Aorta (tissue), 5 donors: ENCODE measurements at regions of chr9 and their contacts with region 1.

Region 1: GRCh38 chr9:96498796-96499195 is 48.8 kb downstream of the HABP4 start:
- DNase-seq: no peak
- ATAC-seq: no peak
- H3K4me3 ChIP-seq: no peak overlapping the region
- H3K27ac ChIP-seq: no peak overlapping the region
- H3K4me1 ChIP-seq: no peaks in the 10 kb centered on the region
- H3K27me3 ChIP-seq: no peaks in the 10 kb centered on the region

Region 2: DNA sequence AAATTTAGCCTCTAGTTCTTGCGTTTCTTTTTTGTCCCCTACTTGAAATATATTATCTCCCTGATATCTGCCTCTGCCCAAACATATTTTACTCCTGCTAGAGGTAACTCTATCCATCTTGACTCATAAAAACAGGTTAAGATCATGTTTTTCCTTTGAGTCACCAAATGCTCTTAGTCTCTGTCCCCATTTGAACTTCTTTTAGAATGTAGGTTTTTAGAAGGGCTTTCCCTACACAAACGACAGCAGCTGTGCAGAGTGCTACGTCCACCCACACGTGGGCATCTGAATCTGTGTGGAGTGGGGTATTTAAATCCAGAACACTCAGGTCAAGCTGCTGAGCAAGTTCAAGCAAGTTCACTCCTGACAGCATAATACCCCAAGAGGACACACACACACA is 199.0 kb before region 1 on chr9:
- intact Hi-C with region 1: no loop called
- DNase-seq: no peak
- ATAC-seq: no peak
- H3K4me3 ChIP-seq: no peak overlapping the region
- H3K27ac ChIP-seq: no peak overlapping the region
- H3K4me1 ChIP-seq: no peaks in the 10 kb centered on the region
- H3K27me3 ChIP-seq: no peaks in the 10 kb centered on the region

Region 3: GRCh38 chr9:96513622-96514021 is 14.8 kb after region 1 on chr9:
- intact Hi-C with region 1: loop called in 1 of 2 experiments (anchors 2 kb)
- DNase-seq: no peak
- ATAC-seq: peak; percentile 19
- H3K4me3 ChIP-seq: no peak overlapping the region
- H3K27ac ChIP-seq: peak overlapping the region; percentile 2 to 55
- H3K4me1 ChIP-seq: peaks cover 0 to 7% of the 10 kb centered on the region in 2 donors
- H3K27me3 ChIP-seq: no peaks in the 10 kb centered on the region